ENCODE measurements at regions of chr16 and their contacts with region 1.

Region 1: DNA sequence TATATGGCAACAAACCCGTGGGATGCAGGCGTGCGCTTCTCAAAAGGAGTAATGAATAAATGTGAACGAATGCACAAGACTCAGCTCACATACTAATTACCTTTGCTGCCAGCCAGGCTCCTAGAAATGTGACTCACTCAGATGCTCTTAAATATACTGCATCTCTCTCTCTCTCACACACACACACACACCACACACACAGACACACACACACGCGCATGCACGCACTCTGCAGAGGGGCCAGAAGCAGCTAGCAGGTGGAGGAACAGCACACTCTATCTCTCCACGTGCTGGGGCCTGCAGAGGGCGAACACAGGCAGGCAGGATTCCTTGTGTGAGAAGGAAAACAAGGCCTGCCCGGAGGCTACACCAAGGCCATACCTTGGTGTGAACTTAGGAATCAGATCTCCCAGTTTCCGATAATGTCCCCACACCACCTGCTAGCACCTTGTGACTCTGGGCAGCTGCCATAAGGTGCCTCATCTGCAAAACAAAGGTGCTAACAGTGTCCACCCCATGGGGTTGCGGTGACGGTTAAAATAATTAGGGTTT is 5.3 kb downstream of the GPRC5B start:
- DNase-seq: peak in 3 of 6 donors; percentile 30 to 47 (median 36)
- ATAC-seq: peak in 3 of 4 donors; percentile 10 to 58 (median 19)
- H3K4me3 ChIP-seq: no peak overlapping the region
- H3K27ac ChIP-seq: peak overlapping the region in 1 of 4 donors; percentile 46
- H3K4me1 ChIP-seq: peaks cover 0 to 4% (median 0%) of the 10 kb centered on the region in 3 donors
- H3K27me3 ChIP-seq: no peaks in the 10 kb centered on the region
- CTCF ChIP-seq: no peak

Region 2: DNA sequence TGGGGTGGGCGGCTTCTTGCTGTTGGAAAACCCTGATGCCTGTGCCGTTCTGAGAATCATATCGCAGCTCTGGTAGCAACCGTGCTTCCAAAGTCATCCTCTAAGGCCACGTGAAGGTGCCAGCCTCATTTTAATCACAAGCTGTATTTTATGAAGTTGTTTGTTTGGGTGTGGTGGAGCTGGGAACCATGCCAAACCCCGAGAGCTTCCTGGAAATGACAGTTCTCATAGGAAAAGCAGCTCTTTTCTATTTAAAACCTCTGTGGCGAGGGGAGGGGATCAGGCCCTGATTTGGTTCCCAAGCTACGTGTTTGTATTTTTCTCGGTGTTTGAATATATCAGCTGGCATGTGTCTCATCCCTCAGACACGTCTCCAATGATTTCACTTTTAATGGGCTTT is 183.0 kb before region 1 on chr16:
- intact Hi-C with region 1: no loop called
- DNase-seq: peak in 5 of 6 donors; percentile 57 to 77 (median 63)
- ATAC-seq: peak in 3 of 4 donors; percentile 38 to 54 (median 54)
- H3K4me3 ChIP-seq: no peak overlapping the region
- H3K27ac ChIP-seq: peak overlapping the region in 2 of 4 donors; percentile 80 to 84
- H3K4me1 ChIP-seq: peaks cover 18 to 45% (median 21%) of the 10 kb centered on the region in 3 donors
- H3K27me3 ChIP-seq: no peaks in the 10 kb centered on the region
- CTCF ChIP-seq: no peak

Region 3: DNA sequence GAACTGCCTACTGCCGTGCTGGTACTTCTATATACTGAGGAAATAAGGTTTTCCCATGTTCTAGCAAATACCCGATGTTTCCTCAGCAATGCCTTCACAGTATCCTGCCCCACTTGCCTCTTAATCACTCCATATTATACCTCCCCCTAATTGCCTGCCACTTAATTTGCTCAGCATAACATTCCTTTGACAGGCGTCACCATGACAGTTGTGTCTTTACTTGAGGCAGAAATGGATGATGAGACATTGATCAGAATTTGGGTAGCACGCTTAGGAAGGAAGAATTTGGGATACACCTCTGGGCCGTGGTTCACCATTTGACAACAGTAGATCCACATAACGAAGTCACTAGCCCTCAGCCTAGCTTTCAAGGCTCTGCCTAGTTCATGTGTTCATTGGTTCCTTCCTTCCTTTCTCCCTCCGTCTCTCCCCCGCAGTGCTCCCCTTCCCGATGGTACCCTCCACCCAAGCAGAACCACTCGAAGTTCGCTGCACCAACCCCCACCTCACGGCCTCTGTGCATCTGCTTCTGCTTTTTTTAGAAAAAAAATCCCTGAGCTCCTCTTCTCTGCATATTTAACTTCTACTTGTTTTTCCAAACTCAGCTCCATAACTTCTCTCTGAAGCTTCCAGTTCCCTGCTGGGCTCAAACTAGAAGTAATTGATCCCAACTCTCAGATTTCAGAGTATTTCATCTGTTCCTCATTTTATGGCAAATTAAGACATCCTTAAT is 141.8 kb before region 1 on chr16:
- intact Hi-C with region 1: loop called in 1 of 3 experiments (anchors 10 kb)
- DNase-seq: no peak
- ATAC-seq: no peak
- H3K4me3 ChIP-seq: no peak overlapping the region
- H3K27ac ChIP-seq: no peak overlapping the region
- H3K4me1 ChIP-seq: peaks cover 0 to 1% (median 0%) of the 10 kb centered on the region in 3 donors
- H3K27me3 ChIP-seq: no peaks in the 10 kb centered on the region
- CTCF ChIP-seq: no peak

Measured in pancreas (tissue), 10 donors.